PC-9 (cell line): ENCODE measurements at regions of chr11 and their contacts with region 1.

Region 1: GRCh38 chr11:19742588-19743292 is 30.1 kb downstream of the NAV2 start:
- DNase-seq: peak; percentile 61 to 79
- H3K4me3 ChIP-seq: no peak overlapping the region
- H3K27ac ChIP-seq: no peak overlapping the region
- H3K4me1 ChIP-seq: peaks cover 6% of the 10 kb centered on the region; the same call in 1 of the 2 replicates
- H3K27me3 ChIP-seq: no peaks in the 10 kb centered on the region
- CTCF ChIP-seq: peak; percentile 94

Region 2: GRCh38 chr11:19808076-19808911 is 65.6 kb after region 1 on chr11:
- CTCF ChIA-PET with region 1: no interaction called
- POLR2A ChIA-PET with region 1: no interaction called
- intact Hi-C with region 1: loop called (anchors 1 kb)
- DNase-seq: no peak
- H3K4me3 ChIP-seq: no peak overlapping the region
- H3K27ac ChIP-seq: no peak overlapping the region
- H3K4me1 ChIP-seq: peaks cover 24% of the 10 kb centered on the region
- H3K27me3 ChIP-seq: no peaks in the 10 kb centered on the region
- CTCF ChIP-seq: peak; percentile 52

Region 3: GRCh38 chr11:19929655-19930054 is 186.9 kb after region 1 on chr11:
- CTCF ChIA-PET with region 1: no interaction called
- POLR2A ChIA-PET with region 1: no interaction called
- intact Hi-C with region 1: no loop called
- DNase-seq: no peak
- H3K4me3 ChIP-seq: no peak overlapping the region
- H3K27ac ChIP-seq: no peak overlapping the region
- H3K4me1 ChIP-seq: no peaks in the 10 kb centered on the region
- H3K27me3 ChIP-seq: no peaks in the 10 kb centered on the region
- CTCF ChIP-seq: no peak

Region 4: GRCh38 chr11:20110908-20111669 is 368.3 kb after region 1 on chr11:
- CTCF ChIA-PET with region 1: no interaction called
- POLR2A ChIA-PET with region 1: no interaction called
- intact Hi-C with region 1: loop called (anchors 10 kb)
- DNase-seq: peak; percentile 58 to 62
- H3K4me3 ChIP-seq: no peak overlapping the region
- H3K27ac ChIP-seq: 0 out of 2 replicates have a peak overlapping the region, but pooled peaks have one; percentile 51
- H3K4me1 ChIP-seq: peaks cover 22% of the 10 kb centered on the region
- H3K27me3 ChIP-seq: no peaks in the 10 kb centered on the region
- CTCF ChIP-seq: peak; percentile 96